Activated T-helper 2 cell treated with anti-CD3 and anti-CD28 coated beads, Interferon-gamma antibody, Interleukin-2, Interleukin-4, amounts not matched to agents 10 μg/mL and 5 μg/mL and 100 μg/mL, durations not matched to agents 14 hours and 24 hours and 36 hours (primary cell): ENCODE measurements at regions of chr6 and their contacts with region 1.

Region 1: GRCh38 chr6:161370880-161371279 is 97.0 kb upstream of the AGPAT4 start:
- DNase-seq: peak; percentile 51
- H3K4me3 Mint-ChIP-seq: no peak overlapping the region
- H3K27ac Mint-ChIP-seq: no peak overlapping the region
- H3K4me1 Mint-ChIP-seq: peaks cover 1% of the 10 kb centered on the region
- H3K27me3 Mint-ChIP-seq: no peaks in the 10 kb centered on the region

Region 2: DNA sequence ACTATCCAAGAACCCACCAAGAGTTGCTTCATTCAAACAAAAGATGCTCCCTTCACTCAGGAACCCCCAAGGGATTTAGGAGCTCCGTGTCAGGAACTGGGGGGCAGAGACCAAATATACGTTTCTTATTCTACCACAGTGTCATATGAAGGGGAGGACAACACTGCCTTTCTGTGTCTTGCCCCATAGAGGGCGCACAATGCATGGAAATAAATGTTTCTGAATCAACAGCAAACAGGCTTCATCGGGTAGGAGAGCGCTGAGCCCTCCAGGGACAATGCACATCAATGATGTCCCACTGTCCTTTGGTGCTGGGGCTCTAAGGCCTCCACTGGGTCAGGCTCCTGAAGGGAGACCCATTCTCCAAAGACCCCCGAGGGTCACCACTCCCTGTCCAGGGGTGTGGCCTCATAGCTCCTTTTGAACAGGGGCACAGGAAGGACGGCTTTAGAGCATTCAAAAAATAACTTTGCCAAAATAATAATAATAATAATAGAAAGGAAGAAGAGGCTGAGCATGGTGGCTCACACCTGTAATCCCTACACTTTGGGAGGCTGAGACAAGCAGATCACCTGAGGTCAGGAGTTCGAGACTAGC is 637.7 kb before region 1 on chr6:
- intact Hi-C with region 1: loop called (anchors 1 kb)
- DNase-seq: no peak
- H3K4me3 Mint-ChIP-seq: no peak overlapping the region
- H3K27ac Mint-ChIP-seq: no peak overlapping the region
- H3K4me1 Mint-ChIP-seq: no peaks in the 10 kb centered on the region
- H3K27me3 Mint-ChIP-seq: peaks cover 2% of the 10 kb centered on the region

Region 3: DNA sequence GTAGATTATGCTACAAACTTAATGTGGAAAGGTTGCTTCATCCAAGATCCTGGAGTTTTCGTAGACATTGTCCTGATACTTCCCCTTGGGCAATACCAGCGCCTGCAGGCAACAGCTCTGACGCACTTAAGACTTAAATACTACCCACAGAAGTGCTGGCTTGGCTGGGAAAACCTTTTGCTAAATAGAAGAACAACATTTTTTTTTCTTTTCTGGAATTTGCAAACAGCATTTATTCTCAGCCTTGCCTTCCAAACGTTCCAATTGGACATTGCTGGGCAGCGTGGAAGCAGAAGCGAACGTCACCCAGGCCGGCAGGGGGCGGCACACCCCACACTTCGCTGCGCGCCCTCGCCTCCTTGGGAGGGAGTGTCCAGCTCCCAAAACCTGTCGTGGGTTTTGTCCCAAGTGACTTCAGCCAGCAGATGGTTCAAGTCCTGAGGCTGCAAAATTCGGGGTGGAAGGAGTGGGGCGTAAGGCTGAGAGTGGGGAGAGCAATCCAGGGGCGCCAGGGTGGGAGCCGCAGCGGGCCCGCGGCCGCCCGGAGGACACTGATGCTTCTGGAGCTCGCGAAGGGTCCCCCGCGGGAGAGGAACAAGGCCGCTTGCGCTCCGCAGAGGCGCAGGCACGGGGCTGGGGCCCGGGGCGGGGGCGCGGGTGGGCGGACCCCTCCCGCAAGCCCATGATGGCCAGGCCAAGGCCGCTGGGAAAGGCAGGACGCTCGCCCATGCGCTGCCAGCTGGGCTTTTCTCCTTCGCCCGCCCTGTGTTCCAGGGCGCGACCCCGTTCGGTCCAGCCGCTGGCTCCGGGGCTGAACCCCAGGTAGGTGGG is 440.1 kb before region 1 on chr6:
- intact Hi-C with region 1: loop called (anchors 1 kb)
- DNase-seq: peak; percentile 32
- H3K4me3 Mint-ChIP-seq: peak overlapping the region; percentile 18
- H3K27ac Mint-ChIP-seq: no peak overlapping the region
- H3K4me1 Mint-ChIP-seq: no peaks in the 10 kb centered on the region
- H3K27me3 Mint-ChIP-seq: peaks cover 25% of the 10 kb centered on the region

Region 4: GRCh38 chr6:161101517-161101916 is 269.4 kb before region 1 on chr6:
- intact Hi-C with region 1: loop called (anchors 5 kb)
- DNase-seq: no peak
- H3K4me3 Mint-ChIP-seq: no peak overlapping the region
- H3K27ac Mint-ChIP-seq: no peak overlapping the region
- H3K4me1 Mint-ChIP-seq: peaks cover 11% of the 10 kb centered on the region
- H3K27me3 Mint-ChIP-seq: no peaks in the 10 kb centered on the region

Region 5: GRCh38 chr6:161152907-161153662 is 217.8 kb before region 1 on chr6:
- intact Hi-C with region 1: loop called (anchors 5 kb)
- DNase-seq: no peak
- H3K4me3 Mint-ChIP-seq: no peak overlapping the region
- H3K27ac Mint-ChIP-seq: no peak overlapping the region
- H3K4me1 Mint-ChIP-seq: no peaks in the 10 kb centered on the region
- H3K27me3 Mint-ChIP-seq: no peaks in the 10 kb centered on the region